IMR-90 (cell line): ENCODE measurements at regions of chr1 and their contacts with region 1.

Region 1: DNA sequence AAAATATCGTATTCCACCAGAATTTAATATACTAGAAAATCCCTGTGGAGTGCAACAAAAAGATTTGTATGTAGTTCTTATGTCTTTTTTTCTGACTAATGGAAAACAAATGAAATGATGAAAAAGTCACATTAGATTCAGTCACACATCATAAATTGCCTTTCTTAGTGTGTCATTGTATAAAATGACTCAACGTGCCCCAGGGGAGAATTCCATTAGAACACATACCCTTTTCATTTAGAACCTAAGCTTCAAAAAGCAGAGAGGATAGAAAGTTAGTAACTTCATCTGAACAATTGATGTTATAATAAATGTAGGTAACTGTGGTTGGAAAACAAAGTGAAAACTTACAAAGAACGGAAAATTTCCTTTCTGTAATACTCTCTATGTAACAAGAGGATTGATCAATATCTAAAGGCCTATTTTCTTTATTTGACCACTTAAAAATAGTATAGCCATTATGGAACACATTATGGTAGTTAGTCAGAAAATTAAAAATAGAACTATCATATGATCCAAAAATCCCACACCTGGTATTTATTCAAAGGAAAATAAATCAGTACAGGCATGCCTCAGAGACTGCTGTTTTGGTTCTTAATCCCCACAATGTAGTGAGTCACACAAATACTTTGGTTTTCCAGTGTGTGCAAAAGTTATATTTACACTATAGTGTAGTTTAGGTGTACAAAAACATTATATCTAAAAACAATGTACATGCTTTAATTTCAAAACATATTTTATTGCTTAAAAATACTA is 1016.1 kb downstream of the KCNT2 start:
- DNase-seq: peak; percentile 89
- ATAC-seq: peak; percentile 86
- H3K4me3 ChIP-seq: no peak overlapping the region
- H3K27ac ChIP-seq: no peak overlapping the region
- H3K4me1 ChIP-seq: no peaks in the 10 kb centered on the region; the same call in 1 of the 2 replicates
- H3K27me3 ChIP-seq: no peaks in the 10 kb centered on the region
- CTCF ChIP-seq: no peak
- POLR2A ChIP-seq: no peak
- RAD21 ChIP-seq: no peak

Region 2: GRCh38 chr1:195005338-195005737 is 586.8 kb before region 1 on chr1:
- CTCF ChIA-PET with region 1: no interaction called
- POLR2A ChIA-PET with region 1: no interaction called
- dilution Hi-C with region 1: no loop called
- in situ Hi-C with region 1: no loop called
- intact Hi-C with region 1: no loop called
- DNase-seq: no peak
- ATAC-seq: no peak
- H3K4me3 ChIP-seq: no peak overlapping the region
- H3K27ac ChIP-seq: no peak overlapping the region
- H3K4me1 ChIP-seq: no peaks in the 10 kb centered on the region
- H3K27me3 ChIP-seq: no peaks in the 10 kb centered on the region
- CTCF ChIP-seq: no peak
- POLR2A ChIP-seq: no peak
- RAD21 ChIP-seq: no peak

Region 3: DNA sequence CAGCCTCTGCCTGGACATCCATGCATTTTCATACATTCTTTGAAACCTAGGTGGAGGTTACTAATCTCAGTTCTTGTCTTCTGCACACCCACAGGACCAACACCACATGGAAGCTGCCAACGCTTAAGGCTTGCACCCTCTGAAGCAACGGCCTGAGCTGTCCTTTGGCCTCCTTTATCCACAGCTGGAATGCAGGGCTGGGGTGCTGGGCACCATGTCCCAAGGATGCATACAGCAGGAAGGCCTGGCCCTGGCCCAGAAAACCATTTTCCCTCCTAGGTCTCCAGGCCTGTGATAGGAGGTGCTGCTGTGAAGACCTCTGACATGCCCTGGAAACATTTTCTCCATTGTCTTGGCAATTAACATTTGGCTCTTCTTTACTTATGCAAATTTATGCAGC is 152.4 kb before region 1 on chr1:
- CTCF ChIA-PET with region 1: no interaction called
- POLR2A ChIA-PET with region 1: no interaction called
- dilution Hi-C with region 1: no loop called
- in situ Hi-C with region 1: no loop called
- intact Hi-C with region 1: no loop called
- DNase-seq: no peak
- ATAC-seq: no peak
- H3K4me3 ChIP-seq: no peak overlapping the region
- H3K27ac ChIP-seq: no peak overlapping the region
- H3K4me1 ChIP-seq: no peaks in the 10 kb centered on the region
- H3K27me3 ChIP-seq: no peaks in the 10 kb centered on the region
- CTCF ChIP-seq: no peak
- POLR2A ChIP-seq: no peak
- RAD21 ChIP-seq: no peak

Region 4: DNA sequence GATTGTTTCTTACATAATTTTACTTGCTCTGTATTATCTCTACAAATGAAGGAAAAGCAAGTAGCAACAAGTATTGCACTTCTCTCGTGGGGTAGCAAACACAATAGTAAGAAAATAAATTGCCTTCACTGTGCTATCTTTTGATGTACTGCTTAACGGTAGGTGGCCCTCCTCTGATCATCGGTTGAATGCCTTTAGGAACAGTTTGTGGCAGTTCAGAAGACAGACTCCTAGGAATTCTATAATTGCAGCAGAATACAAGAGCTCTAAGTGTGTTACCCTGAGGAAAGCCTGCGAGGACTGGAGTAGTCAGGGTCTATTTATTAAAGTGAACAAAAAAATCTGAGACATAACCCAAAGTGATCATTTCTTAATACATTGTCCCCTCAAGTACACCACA is 119.8 kb before region 1 on chr1:
- CTCF ChIA-PET with region 1: no interaction called
- POLR2A ChIA-PET with region 1: no interaction called
- dilution Hi-C with region 1: no loop called
- in situ Hi-C with region 1: no loop called
- intact Hi-C with region 1: no loop called
- DNase-seq: no peak
- ATAC-seq: no peak
- H3K4me3 ChIP-seq: no peak overlapping the region
- H3K27ac ChIP-seq: no peak overlapping the region
- H3K4me1 ChIP-seq: no peaks in the 10 kb centered on the region
- H3K27me3 ChIP-seq: no peaks in the 10 kb centered on the region
- CTCF ChIP-seq: no peak
- POLR2A ChIP-seq: no peak
- RAD21 ChIP-seq: no peak

Region 5: DNA sequence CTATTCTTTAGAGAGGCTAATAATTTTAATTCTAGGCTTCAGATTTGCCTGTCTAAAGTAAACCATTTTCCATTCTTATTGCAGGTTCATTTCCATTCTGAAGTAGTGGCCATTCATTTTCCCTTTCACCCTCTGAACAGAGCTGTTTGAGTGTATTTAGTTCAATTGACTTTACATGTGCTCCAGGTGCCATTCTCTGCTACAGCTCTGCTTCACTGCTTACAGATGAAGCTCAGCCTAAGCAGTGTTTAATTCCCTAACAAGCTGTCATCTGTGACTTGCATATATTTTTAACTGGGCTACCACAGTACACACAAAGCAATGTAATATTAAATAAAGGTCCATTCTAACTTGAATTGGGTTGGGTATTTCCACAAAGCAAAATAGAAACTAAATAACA is 15.5 kb before region 1 on chr1:
- CTCF ChIA-PET with region 1: interaction called, 10 read pairs
- POLR2A ChIA-PET with region 1: no interaction called
- dilution Hi-C with region 1: no loop called
- in situ Hi-C with region 1: no loop called
- intact Hi-C with region 1: no loop called
- DNase-seq: no peak
- ATAC-seq: no peak
- H3K4me3 ChIP-seq: no peak overlapping the region
- H3K27ac ChIP-seq: no peak overlapping the region
- H3K4me1 ChIP-seq: no peaks in the 10 kb centered on the region
- H3K27me3 ChIP-seq: no peaks in the 10 kb centered on the region
- CTCF ChIP-seq: no peak
- POLR2A ChIP-seq: no peak
- RAD21 ChIP-seq: no peak

Region 6: GRCh38 chr1:195608883-195609282 is 16.8 kb after region 1 on chr1:
- CTCF ChIA-PET with region 1: no interaction called
- POLR2A ChIA-PET with region 1: no interaction called
- dilution Hi-C with region 1: no loop called
- in situ Hi-C with region 1: no loop called
- intact Hi-C with region 1: no loop called
- DNase-seq: no peak
- ATAC-seq: no peak
- H3K4me3 ChIP-seq: no peak overlapping the region
- H3K27ac ChIP-seq: no peak overlapping the region
- H3K4me1 ChIP-seq: no peaks in the 10 kb centered on the region
- H3K27me3 ChIP-seq: no peaks in the 10 kb centered on the region
- CTCF ChIP-seq: peak; percentile 9; the same call in 1 of the 2 replicates
- POLR2A ChIP-seq: no peak
- RAD21 ChIP-seq: no peak